ENCODE measurements at regions of chr9 and their contacts with region 1.

Region 1: GRCh38 chr9:92501671-92502393 is 19.5 kb upstream of the ASPN start:
- DNase-seq: peak; percentile 43 to 65
- ATAC-seq: peak; percentile 89 to 93
- H3K4me3 ChIP-seq: no peak overlapping the region
- H3K27ac ChIP-seq: no peak overlapping the region
- H3K4me1 ChIP-seq: peaks cover 19% of the 10 kb centered on the region
- CTCF ChIP-seq: peak; percentile 54
- EP300 ChIP-seq: no peak
- POLR2A ChIP-seq: no peak
- RAD21 ChIP-seq: peak; percentile 30 to 42; a peak in 2 of 5 replicates

Region 2: GRCh38 chr9:92517046-92517445 is 15.2 kb after region 1 on chr9:
- CTCF ChIA-PET with region 1: interaction called, 10 read pairs
- POLR2A ChIA-PET with region 1: no interaction called
- DNase-seq: no peak
- ATAC-seq: no peak
- H3K4me3 ChIP-seq: no peak overlapping the region
- H3K27ac ChIP-seq: no peak overlapping the region
- H3K4me1 ChIP-seq: no peaks in the 10 kb centered on the region
- CTCF ChIP-seq: no peak
- EP300 ChIP-seq: no peak
- POLR2A ChIP-seq: no peak
- RAD21 ChIP-seq: no peak

Region 3: GRCh38 chr9:92837191-92837590 is 335.4 kb after region 1 on chr9:
- CTCF ChIA-PET with region 1: no interaction called
- POLR2A ChIA-PET with region 1: no interaction called
- DNase-seq: no peak
- ATAC-seq: no peak
- H3K4me3 ChIP-seq: no peak overlapping the region
- H3K27ac ChIP-seq: no peak overlapping the region
- H3K4me1 ChIP-seq: no peaks in the 10 kb centered on the region
- CTCF ChIP-seq: no peak
- EP300 ChIP-seq: no peak
- POLR2A ChIP-seq: no peak
- RAD21 ChIP-seq: no peak

Measured in A549 (cell line).